K562 (cell line): ENCODE measurements at regions of chr22 and their contacts with region 1.

Region 1: DNA sequence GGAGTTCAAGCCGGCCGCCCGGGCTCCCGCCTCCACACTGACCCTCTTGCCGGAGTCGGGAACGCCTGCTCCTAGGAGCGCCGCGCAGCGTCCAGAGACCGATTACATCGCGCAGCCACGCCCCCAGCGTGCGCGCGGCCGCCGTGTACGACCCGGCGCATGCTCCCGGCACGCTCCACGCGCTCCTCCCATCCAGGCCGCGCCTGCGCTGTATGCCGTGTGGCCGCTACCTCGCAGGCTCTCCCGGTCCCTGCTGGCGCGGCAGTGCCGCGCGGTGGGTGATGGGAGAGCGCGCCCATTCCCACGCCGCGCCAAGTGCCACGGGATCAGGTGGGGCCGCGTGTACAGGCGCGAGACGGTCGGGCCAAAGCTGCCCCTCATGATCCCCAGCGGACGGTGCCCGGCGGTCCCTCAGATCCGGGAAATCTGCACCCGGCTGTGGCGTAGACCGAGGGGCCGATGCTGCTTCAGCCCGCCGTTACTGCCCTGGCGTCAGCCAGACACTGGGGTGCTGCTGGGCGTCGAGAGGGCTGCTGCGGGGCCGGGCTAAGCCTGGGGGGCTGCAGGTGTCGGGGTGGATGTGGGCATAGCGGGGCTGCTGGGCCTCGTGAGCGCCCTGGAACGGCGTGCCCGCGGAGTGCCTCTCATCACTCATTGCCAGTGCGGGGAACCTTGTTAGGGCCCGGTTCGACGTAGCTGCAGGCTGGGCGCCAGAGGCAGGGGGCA is at the starts of genes GNB1L and RTL10:
- DNase-seq: peak; percentile 100
- ATAC-seq: peak; percentile 92
- H3K4me3 ChIP-seq: peak within 1 kb of the TSS; percentile 62
- H3K27ac ChIP-seq: peak within 1 kb of the TSS; percentile 84
- H3K4me1 ChIP-seq: peaks cover 23 to 63% of the 10 kb centered on the region in 2 experiments
- H3K27me3 ChIP-seq: no peaks in the 10 kb centered on the region
- CTCF ChIP-seq: peak; percentile 29 to 50 (median 49); a peak in 5 of 6 replicates
- EP300 ChIP-seq: peak; percentile 57
- POLR2A ChIP-seq: no peak
- RAD21 ChIP-seq: 0 out of 4 replicates have a peak, but pooled peaks of 1 of the 2 experiments have one; percentile 46
- polyA plus RNA-seq, gene GNB1L: 0.56 to 3.5 TPM
- polyA plus RNA-seq, gene RTL10: 23.6 to 33.7 TPM

Region 2: DNA sequence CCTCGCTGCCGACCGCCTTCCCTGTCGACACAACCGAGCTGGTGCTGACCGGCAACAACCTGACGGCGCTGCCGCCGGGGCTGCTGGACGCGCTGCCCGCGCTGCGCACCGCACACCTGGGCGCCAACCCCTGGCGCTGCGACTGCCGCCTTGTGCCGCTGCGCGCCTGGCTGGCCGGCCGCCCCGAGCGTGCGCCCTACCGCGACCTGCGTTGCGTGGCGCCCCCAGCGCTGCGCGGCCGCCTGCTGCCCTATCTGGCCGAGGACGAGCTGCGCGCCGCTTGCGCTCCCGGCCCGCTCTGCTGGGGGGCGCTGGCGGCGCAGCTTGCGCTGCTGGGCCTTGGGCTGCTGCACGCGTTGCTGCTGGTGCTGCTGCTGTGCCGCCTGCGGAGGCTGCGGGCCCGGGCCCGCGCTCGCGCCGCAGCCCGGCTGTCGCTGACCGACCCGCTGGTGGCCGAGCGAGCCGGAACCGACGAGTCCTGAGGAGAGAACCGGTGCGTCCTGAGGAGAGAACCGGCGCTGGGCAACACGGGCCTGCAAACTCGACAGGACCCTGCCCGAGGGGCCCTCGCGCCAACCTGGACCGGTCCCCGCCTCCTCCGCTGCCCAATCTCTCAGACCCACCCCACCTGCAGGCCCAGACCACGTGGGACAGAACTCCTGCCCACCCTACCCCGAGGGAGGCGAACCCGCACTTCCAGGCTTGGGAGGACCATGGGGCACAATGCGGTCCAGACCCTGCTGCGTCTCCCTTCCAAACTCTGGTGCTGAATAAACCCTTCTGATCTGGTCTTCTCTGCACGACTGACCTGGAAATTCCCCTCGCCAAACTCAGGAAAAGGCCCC is 130.7 kb before region 1 on chr22:
- CTCF ChIA-PET with region 1: no interaction called
- POLR2A ChIA-PET with region 1: interaction called, 6 read pairs
- in situ Hi-C with region 1: no loop called
- intact Hi-C with region 1: loop called (anchors 2 kb)
- DNase-seq: peak; percentile 94 to 97 (median 94)
- ATAC-seq: peak; percentile 70
- H3K4me3 ChIP-seq: peak overlapping the region; percentile 55
- H3K27ac ChIP-seq: peak overlapping the region; percentile 88
- H3K4me1 ChIP-seq: peaks cover 45 to 90% of the 10 kb centered on the region in 2 experiments
- H3K27me3 ChIP-seq: no peaks in the 10 kb centered on the region; a peak in 1 of 5 replicates
- CTCF ChIP-seq: peak; percentile 72 to 98 (median 97); a peak in 5 of 6 replicates
- EP300 ChIP-seq: peak; percentile 72
- POLR2A ChIP-seq: no peak
- RAD21 ChIP-seq: peak in 1 of 2 experiments; percentile 93; a peak in 2 of 4 replicates

Region 3: DNA sequence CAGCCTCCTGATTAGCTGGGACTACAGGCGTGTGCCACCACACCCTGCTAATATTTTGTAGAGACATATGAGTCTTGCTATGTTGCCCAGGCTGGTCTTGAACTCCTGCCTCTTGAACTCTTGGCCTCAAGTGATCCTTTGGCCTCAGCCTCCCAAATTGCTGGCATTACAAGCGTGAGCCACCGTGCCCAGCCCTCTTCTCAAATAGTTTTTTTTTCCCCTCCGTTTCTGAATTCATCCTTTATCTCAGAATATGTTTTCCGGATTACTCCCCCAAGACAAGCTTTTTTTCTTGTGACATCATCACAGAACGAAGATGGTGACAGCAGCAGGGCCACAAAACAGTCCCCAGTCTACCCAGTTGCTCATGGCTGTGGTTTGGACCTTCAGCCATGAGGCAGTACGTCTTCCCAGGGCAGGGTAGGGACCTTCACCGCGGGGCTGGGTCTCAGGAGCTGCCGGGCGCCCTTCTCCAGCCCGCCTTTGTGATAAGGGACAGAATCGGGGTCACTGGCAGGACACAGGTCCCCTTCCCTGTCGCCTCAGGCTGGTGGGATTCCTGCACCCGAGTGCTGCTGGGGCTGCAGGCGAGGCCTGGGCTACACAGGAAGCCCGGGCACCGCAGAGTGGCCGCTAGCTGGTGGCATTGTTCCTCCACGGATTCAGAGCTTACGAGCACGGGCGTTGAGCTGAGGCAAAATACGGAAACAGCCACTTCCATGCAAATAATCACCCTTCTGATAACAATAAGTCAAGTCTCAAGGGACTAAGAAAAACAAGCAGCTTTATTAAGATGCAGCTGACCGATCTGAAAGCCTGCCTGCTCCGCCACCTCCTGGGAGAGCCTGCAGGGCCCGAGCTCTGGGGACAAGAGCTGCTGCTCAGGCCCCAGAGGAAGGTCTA is 82.3 kb before region 1 on chr22:
- CTCF ChIA-PET with region 1: no interaction called
- POLR2A ChIA-PET with region 1: interaction called, 12 read pairs
- in situ Hi-C with region 1: no loop called
- intact Hi-C with region 1: no loop called
- DNase-seq: peak; percentile 65 to 73 (median 69)
- ATAC-seq: peak; percentile 54
- H3K4me3 ChIP-seq: no peak overlapping the region
- H3K27ac ChIP-seq: peak overlapping the region; percentile 11; the same call in 1 of the 3 replicates
- H3K4me1 ChIP-seq: peaks cover 38 to 77% of the 10 kb centered on the region in 2 experiments
- H3K27me3 ChIP-seq: peaks cover 0 to 9% of the 10 kb centered on the region in 2 experiments; a peak in 2 of 5 replicates
- CTCF ChIP-seq: peak in 2 of 3 experiments; percentile 34 to 37; a peak in 2 of 6 replicates
- EP300 ChIP-seq: no peak
- POLR2A ChIP-seq: no peak
- RAD21 ChIP-seq: peak in 1 of 2 experiments; percentile 51; a peak in 2 of 4 replicates

Region 4: GRCh38 chr22:19818324-19819215 is 36.4 kb before region 1 on chr22:
- CTCF ChIA-PET with region 1: no interaction called
- POLR2A ChIA-PET with region 1: interaction called, 247 read pairs
- in situ Hi-C with region 1: no loop called
- intact Hi-C with region 1: loop called (anchors 5 kb)
- DNase-seq: no peak
- ATAC-seq: no peak
- H3K4me3 ChIP-seq: no peak overlapping the region
- H3K27ac ChIP-seq: no peak overlapping the region
- H3K4me1 ChIP-seq: peaks cover 22 to 81% of the 10 kb centered on the region in 2 experiments
- H3K27me3 ChIP-seq: no peaks in the 10 kb centered on the region
- CTCF ChIP-seq: peak in 2 of 3 experiments; percentile 13 to 21; a peak in 1 of 6 replicates
- EP300 ChIP-seq: no peak
- POLR2A ChIP-seq: no peak
- RAD21 ChIP-seq: no peak

Region 5: DNA sequence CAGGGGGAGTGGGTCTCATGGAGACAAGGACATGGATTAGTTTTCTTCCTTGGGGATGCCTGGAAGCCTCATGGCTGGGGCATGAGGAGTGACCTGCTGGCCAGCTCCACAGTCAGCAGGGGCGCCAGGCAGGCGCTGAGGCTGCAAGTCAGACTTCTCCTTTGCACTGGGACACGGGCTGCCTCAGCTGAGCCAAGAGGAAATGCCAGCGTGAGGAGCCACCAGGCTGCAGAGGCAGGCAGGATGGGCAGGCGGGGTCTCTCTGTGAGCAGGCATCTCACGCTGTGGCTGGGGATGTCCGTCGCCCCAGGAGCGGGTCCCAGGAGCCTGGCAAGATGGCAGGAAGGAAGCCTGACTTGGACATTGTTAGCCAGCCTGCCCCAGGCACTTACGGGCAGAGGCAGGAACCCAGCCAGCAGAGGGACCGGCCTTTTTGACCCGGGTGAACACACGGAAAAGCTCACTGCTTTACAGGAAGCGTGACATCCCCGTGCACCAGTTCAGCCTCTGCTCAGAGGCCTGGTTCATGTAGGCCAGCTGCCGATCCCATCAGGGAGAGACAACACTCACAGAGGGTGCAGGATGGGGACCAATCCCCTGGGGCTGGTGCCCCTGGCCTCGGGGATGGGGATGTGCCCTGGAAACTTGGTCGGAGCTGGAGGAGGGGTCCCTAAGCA is 10.4 kb before region 1 on chr22:
- CTCF ChIA-PET with region 1: interaction called, 3 read pairs
- POLR2A ChIA-PET with region 1: interaction called, 60 read pairs
- in situ Hi-C with region 1: no loop called
- intact Hi-C with region 1: no loop called
- DNase-seq: peak in 1 of 4 experiments; percentile 28
- ATAC-seq: no peak
- H3K4me3 ChIP-seq: no peak overlapping the region
- H3K27ac ChIP-seq: no peak overlapping the region
- H3K4me1 ChIP-seq: peaks cover 0 to 50% of the 10 kb centered on the region in 2 experiments; a peak in 2 of 5 replicates
- H3K27me3 ChIP-seq: no peaks in the 10 kb centered on the region
- CTCF ChIP-seq: no peak
- EP300 ChIP-seq: no peak
- POLR2A ChIP-seq: no peak
- RAD21 ChIP-seq: no peak

Region 6: GRCh38 chr22:19891317-19892256 is 36.6 kb after region 1 on chr22:
- CTCF ChIA-PET with region 1: no interaction called
- POLR2A ChIA-PET with region 1: interaction called, 11 read pairs
- in situ Hi-C with region 1: no loop called
- intact Hi-C with region 1: no loop called
- DNase-seq: peak; percentile 98 to 99 (median 98)
- ATAC-seq: peak; percentile 92
- H3K4me3 ChIP-seq: no peak overlapping the region
- H3K27ac ChIP-seq: peak overlapping the region; percentile 46; the same call in 2 of the 3 replicates
- H3K4me1 ChIP-seq: peaks cover 24 to 62% of the 10 kb centered on the region in 2 experiments
- H3K27me3 ChIP-seq: no peaks in the 10 kb centered on the region
- CTCF ChIP-seq: peak in 2 of 3 experiments; percentile 9 to 33; a peak in 2 of 6 replicates
- EP300 ChIP-seq: peak; percentile 99
- POLR2A ChIP-seq: no peak; the same call in 1 of the 2 replicates
- RAD21 ChIP-seq: peak in 1 of 2 experiments; percentile 54; a peak in 2 of 4 replicates

Region 7: GRCh38 chr22:19918332-19919106 is 63.6 kb after region 1 on chr22:
- CTCF ChIA-PET with region 1: no interaction called
- POLR2A ChIA-PET with region 1: no interaction called
- in situ Hi-C with region 1: no loop called
- intact Hi-C with region 1: no loop called
- DNase-seq: peak; percentile 69 to 84 (median 72)
- ATAC-seq: peak; percentile 80
- H3K4me3 ChIP-seq: no peak overlapping the region
- H3K27ac ChIP-seq: no peak overlapping the region
- H3K4me1 ChIP-seq: peaks cover 0 to 26% of the 10 kb centered on the region in 2 experiments; a peak in 4 of 5 replicates
- H3K27me3 ChIP-seq: no peaks in the 10 kb centered on the region
- CTCF ChIP-seq: no peak
- EP300 ChIP-seq: no peak
- POLR2A ChIP-seq: no peak
- RAD21 ChIP-seq: no peak